ENCODE measurements at regions of chr2 and their contacts with region 1.

Region 1: GRCh38 chr2:111162718-111163331 is 42.1 kb downstream of the BCL2L11 start:
- DNase-seq: peak in 1 of 35 experiments; percentile 12
- ATAC-seq: peak in 1 of 4 experiments; percentile 57
- H3K4me3 ChIP-seq: no peak overlapping the region
- H3K4me3 Mint-ChIP-seq: peak overlapping the region in 1 of 3 donors; percentile 30
- H3K27ac ChIP-seq: no peak overlapping the region
- H3K27ac Mint-ChIP-seq: peak overlapping the region in 1 of 2 donors; percentile 45
- H3K4me1 ChIP-seq: peaks cover 24% of the 10 kb centered on the region in 2 experiments
- H3K4me1 Mint-ChIP-seq: peaks cover 30 to 40% (median 38%) of the 10 kb centered on the region in 3 donors
- H3K27me3 ChIP-seq: no peaks in the 10 kb centered on the region
- H3K27me3 Mint-ChIP-seq: no peaks in the 10 kb centered on the region

Region 2: GRCh38 chr2:111148925-111149324 is 13.9 kb before region 1 on chr2:
- CTCF ChIA-PET with region 1: no interaction called
- POLR2A ChIA-PET with region 1: no interaction called
- DNase-seq: no peak
- ATAC-seq: no peak
- H3K4me3 ChIP-seq: no peak overlapping the region
- H3K4me3 Mint-ChIP-seq: no peak overlapping the region
- H3K27ac ChIP-seq: no peak overlapping the region
- H3K27ac Mint-ChIP-seq: no peak overlapping the region
- H3K4me1 ChIP-seq: no peaks in the 10 kb centered on the region
- H3K4me1 Mint-ChIP-seq: peaks cover 9 to 39% (median 11%) of the 10 kb centered on the region in 3 donors
- H3K27me3 ChIP-seq: no peaks in the 10 kb centered on the region
- H3K27me3 Mint-ChIP-seq: no peaks in the 10 kb centered on the region

Region 3: GRCh38 chr2:112075490-112076260 is 912.9 kb after region 1 on chr2:
- CTCF ChIA-PET with region 1: interaction called in 1 of 2 experiments, 16 read pairs
- POLR2A ChIA-PET with region 1: no interaction called
- DNase-seq: no peak
- ATAC-seq: no peak
- H3K4me3 ChIP-seq: no peak overlapping the region
- H3K4me3 Mint-ChIP-seq: no peak overlapping the region
- H3K27ac ChIP-seq: no peak overlapping the region
- H3K27ac Mint-ChIP-seq: no peak overlapping the region
- H3K4me1 ChIP-seq: no peaks in the 10 kb centered on the region
- H3K4me1 Mint-ChIP-seq: peaks cover 28 to 35% (median 28%) of the 10 kb centered on the region in 3 donors
- H3K27me3 ChIP-seq: no peaks in the 10 kb centered on the region
- H3K27me3 Mint-ChIP-seq: no peaks in the 10 kb centered on the region

Measured in T-cell (primary cell).